Activated naive CD4-positive, alpha-beta T cell treated with anti-CD3 and anti-CD28 coated beads for 36 hours (primary cell): ENCODE measurements at regions of chr11 and their contacts with region 1.

Region 1: DNA sequence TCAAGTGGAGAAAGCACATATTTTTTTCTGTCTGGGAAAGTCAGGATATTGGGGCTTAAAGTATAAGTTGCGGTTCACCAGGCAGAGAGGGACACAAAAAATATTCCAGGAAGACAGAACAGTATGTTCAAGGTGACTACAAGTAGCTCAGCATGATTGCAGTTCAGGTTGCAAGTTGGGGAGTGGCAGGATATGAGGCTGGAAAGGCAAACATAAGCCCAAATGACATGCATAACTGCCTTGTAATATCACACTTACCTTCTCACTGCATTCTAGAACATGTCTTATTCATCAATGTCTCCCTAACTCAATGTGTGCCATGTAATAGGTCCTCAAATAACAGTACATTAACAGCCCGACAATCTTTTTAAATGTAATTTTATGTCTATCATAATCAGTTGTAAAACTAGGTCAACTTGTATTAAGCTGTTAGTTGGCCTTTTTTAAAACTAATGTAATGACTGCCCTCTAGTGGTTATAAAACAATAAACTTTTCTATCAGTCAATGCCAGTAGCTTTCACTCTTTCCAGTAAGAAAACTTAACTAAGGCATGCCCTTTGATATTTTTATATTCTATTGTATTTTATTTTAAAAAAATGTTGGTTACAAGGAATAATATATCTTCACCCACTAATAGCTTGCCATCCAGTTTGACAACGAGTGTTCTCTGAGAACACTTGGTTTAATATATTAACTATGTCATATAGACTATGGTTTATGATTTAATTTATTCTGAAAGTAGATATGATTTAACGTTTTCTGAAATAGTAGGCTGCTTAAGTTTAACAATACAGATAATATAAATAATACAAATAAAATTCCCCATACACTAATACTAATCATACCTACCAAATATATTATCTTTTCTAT is 39.4 kb upstream of the CFAP300 start:
- DNase-seq: no peak
- H3K4me3 Mint-ChIP-seq: no peak overlapping the region
- H3K27ac Mint-ChIP-seq: no peak overlapping the region
- H3K4me1 Mint-ChIP-seq: peaks cover 7% of the 10 kb centered on the region
- H3K27me3 Mint-ChIP-seq: peaks cover 11% of the 10 kb centered on the region

Region 2: DNA sequence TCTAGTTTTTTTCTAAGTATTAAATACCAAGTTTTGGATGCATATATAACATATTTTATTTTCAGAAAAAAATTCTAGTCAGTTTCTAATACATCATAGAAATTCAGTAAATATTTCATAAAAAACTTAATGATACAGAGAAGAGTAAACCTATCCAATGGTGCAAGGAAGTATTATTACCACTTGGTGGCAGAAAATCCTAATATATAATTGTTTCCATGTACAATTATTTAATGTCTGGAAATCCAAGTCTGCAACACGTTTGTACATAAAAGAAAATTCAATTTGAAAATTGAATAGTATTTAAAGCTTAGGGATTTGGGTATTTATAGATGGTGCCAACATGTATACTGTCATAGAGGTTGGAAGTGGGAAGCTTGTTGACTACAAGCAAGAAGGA is 551.0 kb before region 1 on chr11:
- CTCF ChIA-PET with region 1: no interaction called
- intact Hi-C with region 1: loop called (anchors 10 kb)
- DNase-seq: no peak
- H3K4me3 Mint-ChIP-seq: no peak overlapping the region
- H3K27ac Mint-ChIP-seq: no peak overlapping the region
- H3K4me1 Mint-ChIP-seq: no peaks in the 10 kb centered on the region
- H3K27me3 Mint-ChIP-seq: no peaks in the 10 kb centered on the region

Region 3: DNA sequence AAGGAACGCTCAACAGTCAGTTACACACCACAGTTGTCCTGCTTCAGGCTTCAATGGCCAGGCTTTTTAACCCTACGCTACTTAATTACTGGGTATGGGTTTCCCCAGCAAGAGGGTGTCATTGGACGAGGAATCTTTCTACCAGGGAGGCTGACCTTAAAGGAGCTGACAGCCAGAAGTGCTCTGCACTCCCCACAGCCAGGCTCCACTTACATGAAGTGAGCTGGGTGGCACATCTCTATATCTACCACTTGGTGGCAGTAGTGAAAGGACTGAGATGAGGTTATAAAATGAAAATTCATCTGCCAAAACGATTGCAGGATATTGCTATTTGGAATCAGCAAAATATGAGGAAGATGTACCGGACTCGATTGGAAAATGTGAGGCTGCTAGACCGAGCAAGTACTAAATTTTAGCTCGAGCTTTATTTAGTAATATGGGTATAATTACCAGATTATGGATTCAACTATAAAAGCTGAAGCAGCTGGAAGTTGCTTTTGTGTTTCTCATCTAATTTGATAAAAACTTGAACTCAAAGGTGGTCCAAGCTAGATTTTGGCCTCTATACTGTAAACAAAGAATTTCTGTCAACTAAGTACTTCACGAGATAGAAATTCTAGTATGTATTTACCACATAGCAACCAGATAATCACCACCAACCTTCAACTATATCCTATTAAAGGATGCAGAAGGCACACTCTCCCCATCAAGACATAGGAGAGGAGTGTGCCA is 146.9 kb before region 1 on chr11:
- CTCF ChIA-PET with region 1: interaction called, 122 read pairs
- intact Hi-C with region 1: loop called (anchors 1 kb)
- DNase-seq: peak; percentile 37
- H3K4me3 Mint-ChIP-seq: no peak overlapping the region
- H3K27ac Mint-ChIP-seq: no peak overlapping the region
- H3K4me1 Mint-ChIP-seq: no peaks in the 10 kb centered on the region
- H3K27me3 Mint-ChIP-seq: peaks cover 8% of the 10 kb centered on the region

Region 4: DNA sequence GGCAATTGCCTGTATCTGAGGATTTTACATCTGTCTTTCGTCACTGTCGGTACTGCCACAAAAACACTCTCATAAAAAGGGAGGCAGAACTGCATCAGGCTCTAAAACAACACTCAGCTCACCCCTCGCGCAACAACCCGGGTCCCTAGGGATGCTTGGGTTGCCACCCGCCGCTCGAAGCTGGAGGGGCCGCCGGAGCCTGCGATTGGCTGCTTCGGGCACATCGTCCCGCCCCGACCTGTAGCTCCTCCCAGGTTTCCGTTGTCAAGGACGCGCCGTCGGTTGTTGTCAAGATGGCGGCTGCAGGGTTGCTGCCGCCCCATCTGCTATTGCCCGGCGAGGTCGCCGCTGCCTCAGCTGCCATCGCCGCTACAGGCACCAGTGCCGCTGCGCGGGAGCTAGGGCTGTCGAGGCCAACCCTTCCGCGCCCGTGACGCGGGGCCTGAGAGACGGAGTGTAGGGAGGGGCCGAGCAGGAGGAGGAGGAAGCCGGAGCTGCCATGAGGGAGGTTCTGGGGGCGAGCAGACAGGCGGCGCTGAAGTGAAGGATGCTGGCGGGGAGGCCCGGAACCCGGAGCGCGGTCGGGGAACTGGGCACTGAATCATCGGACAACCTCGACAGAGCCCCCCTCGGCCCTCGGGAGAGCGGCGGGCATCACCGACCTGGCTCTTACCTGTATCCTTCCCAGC is 92.9 kb before region 1 on chr11 and contains the start of gene CEP126:
- CTCF ChIA-PET with region 1: interaction called, 3 read pairs
- intact Hi-C with region 1: loop called (anchors 1 kb)
- DNase-seq: peak; percentile 96
- H3K4me3 Mint-ChIP-seq: peak within 1 kb of the TSS; percentile 87
- H3K27ac Mint-ChIP-seq: peak within 1 kb of the TSS; percentile 72
- H3K4me1 Mint-ChIP-seq: peaks cover 19% of the 10 kb centered on the region
- H3K27me3 Mint-ChIP-seq: no peaks in the 10 kb centered on the region
- total RNA-seq, gene CEP126: 1.1 to 1.2 TPM

Region 5: GRCh38 chr11:101996111-101996510 is 11.7 kb before region 1 on chr11:
- CTCF ChIA-PET with region 1: interaction called, 19 read pairs
- intact Hi-C with region 1: no loop called
- DNase-seq: no peak
- H3K4me3 Mint-ChIP-seq: no peak overlapping the region
- H3K27ac Mint-ChIP-seq: no peak overlapping the region
- H3K4me1 Mint-ChIP-seq: no peaks in the 10 kb centered on the region
- H3K27me3 Mint-ChIP-seq: no peaks in the 10 kb centered on the region